B cell (primary cell): ENCODE measurements at regions of chr6 and their contacts with region 1.

Region 1: GRCh38 chr6:100138346-100139022 is 144.5 kb upstream of the MCHR2 start:
- DNase-seq: no peak
- ATAC-seq: no peak
- H3K4me3 ChIP-seq: no peak overlapping the region
- H3K4me3 Mint-ChIP-seq: no peak overlapping the region
- H3K27ac ChIP-seq: no peak overlapping the region
- H3K27ac Mint-ChIP-seq: no peak overlapping the region
- H3K4me1 ChIP-seq: no peaks in the 10 kb centered on the region
- H3K4me1 Mint-ChIP-seq: no peaks in the 10 kb centered on the region
- H3K27me3 ChIP-seq: peaks cover 0 to 2% (median 0%) of the 10 kb centered on the region in 4 experiments
- H3K27me3 Mint-ChIP-seq: no peaks in the 10 kb centered on the region
- CTCF ChIP-seq: no peak

Region 2: GRCh38 chr6:100818066-100818465 is 679.6 kb after region 1 on chr6:
- CTCF ChIA-PET with region 1: no interaction called
- POLR2A ChIA-PET with region 1: interaction called, 17 read pairs
- intact Hi-C with region 1: no loop called
- DNase-seq: no peak
- ATAC-seq: no peak
- H3K4me3 ChIP-seq: no peak overlapping the region
- H3K4me3 Mint-ChIP-seq: no peak overlapping the region
- H3K27ac ChIP-seq: no peak overlapping the region
- H3K27ac Mint-ChIP-seq: no peak overlapping the region
- H3K4me1 ChIP-seq: no peaks in the 10 kb centered on the region
- H3K4me1 Mint-ChIP-seq: peaks cover 10% of the 10 kb centered on the region
- H3K27me3 ChIP-seq: no peaks in the 10 kb centered on the region
- H3K27me3 Mint-ChIP-seq: no peaks in the 10 kb centered on the region
- CTCF ChIP-seq: no peak